ENCODE measurements at regions of chr10 and their contacts with region 1.

Region 1: DNA sequence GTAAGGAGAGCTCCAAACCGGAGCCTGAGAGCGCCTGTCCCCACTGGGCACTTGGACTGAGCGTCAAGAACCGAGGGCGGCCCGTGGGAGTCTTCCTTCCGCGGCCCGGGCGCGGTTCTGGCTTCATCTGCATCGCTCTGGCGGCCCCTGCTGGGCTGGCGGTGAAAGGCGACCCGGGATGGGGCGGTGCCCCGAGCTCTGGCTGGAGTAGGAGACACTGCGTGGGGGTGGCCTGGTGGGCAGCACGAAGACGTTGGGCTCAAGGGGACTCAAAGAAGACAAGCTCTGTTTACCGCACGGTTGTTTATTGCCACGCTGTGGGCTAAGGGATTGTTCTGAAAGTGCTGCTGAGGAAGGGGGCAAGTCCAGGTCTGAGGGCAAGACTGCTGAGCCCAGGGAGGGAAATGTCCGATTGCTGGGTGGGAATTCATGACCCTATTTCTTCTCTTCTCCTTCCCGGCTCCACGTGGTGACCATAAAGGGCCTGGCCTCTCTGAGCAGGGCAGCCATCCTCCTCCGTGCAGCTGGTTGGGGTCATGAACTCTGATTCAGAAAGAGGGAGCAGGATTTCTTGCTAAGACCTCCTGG is 29.8 kb downstream of the PLAU start:
- DNase-seq: peak; percentile 88
- ATAC-seq: peak; percentile 99
- H3K4me3 Mint-ChIP-seq: no peak overlapping the region
- H3K27ac Mint-ChIP-seq: no peak overlapping the region
- H3K4me1 Mint-ChIP-seq: peaks cover 5% of the 10 kb centered on the region
- H3K27me3 Mint-ChIP-seq: peaks cover 9% of the 10 kb centered on the region
- CTCF ChIP-seq: peak; percentile 99

Region 2: GRCh38 chr10:73803680-73804286 is 136.9 kb before region 1 on chr10:
- CTCF ChIA-PET with region 1: no interaction called
- POLR2A ChIA-PET with region 1: no interaction called
- intact Hi-C with region 1: no loop called
- DNase-seq: peak; percentile 23
- ATAC-seq: peak; percentile 73
- H3K4me3 Mint-ChIP-seq: no peak overlapping the region
- H3K27ac Mint-ChIP-seq: peak overlapping the region; percentile 89
- H3K4me1 Mint-ChIP-seq: peaks cover 43% of the 10 kb centered on the region
- H3K27me3 Mint-ChIP-seq: no peaks in the 10 kb centered on the region
- CTCF ChIP-seq: no peak

Region 3: GRCh38 chr10:73848821-73849489 is 91.8 kb before region 1 on chr10:
- CTCF ChIA-PET with region 1: interaction called, 53 read pairs
- POLR2A ChIA-PET with region 1: interaction called, 4 read pairs
- intact Hi-C with region 1: no loop called
- DNase-seq: peak; percentile 97
- ATAC-seq: peak; percentile 100
- H3K4me3 Mint-ChIP-seq: no peak overlapping the region
- H3K27ac Mint-ChIP-seq: peak overlapping the region; percentile 76
- H3K4me1 Mint-ChIP-seq: peaks cover 12% of the 10 kb centered on the region
- H3K27me3 Mint-ChIP-seq: no peaks in the 10 kb centered on the region
- CTCF ChIP-seq: peak; percentile 94

Region 4: GRCh38 chr10:73906524-73907447 is 33.9 kb before region 1 on chr10:
- CTCF ChIA-PET with region 1: interaction called, 466 read pairs
- POLR2A ChIA-PET with region 1: no interaction called
- intact Hi-C with region 1: no loop called
- DNase-seq: no peak
- ATAC-seq: no peak
- H3K4me3 Mint-ChIP-seq: no peak overlapping the region
- H3K27ac Mint-ChIP-seq: no peak overlapping the region
- H3K4me1 Mint-ChIP-seq: peaks cover 35% of the 10 kb centered on the region
- H3K27me3 Mint-ChIP-seq: peaks cover 52% of the 10 kb centered on the region
- CTCF ChIP-seq: no peak

Region 5: GRCh38 chr10:73956476-73957359 is 16.0 kb after region 1 on chr10:
- CTCF ChIA-PET with region 1: interaction called, 77 read pairs
- POLR2A ChIA-PET with region 1: interaction called, 3 read pairs
- intact Hi-C with region 1: no loop called
- DNase-seq: peak; percentile 53
- ATAC-seq: peak; percentile 82
- H3K4me3 Mint-ChIP-seq: peak overlapping the region; percentile 38
- H3K27ac Mint-ChIP-seq: peak overlapping the region; percentile 84
- H3K4me1 Mint-ChIP-seq: peaks cover 40% of the 10 kb centered on the region
- H3K27me3 Mint-ChIP-seq: no peaks in the 10 kb centered on the region
- CTCF ChIP-seq: no peak

Region 6: DNA sequence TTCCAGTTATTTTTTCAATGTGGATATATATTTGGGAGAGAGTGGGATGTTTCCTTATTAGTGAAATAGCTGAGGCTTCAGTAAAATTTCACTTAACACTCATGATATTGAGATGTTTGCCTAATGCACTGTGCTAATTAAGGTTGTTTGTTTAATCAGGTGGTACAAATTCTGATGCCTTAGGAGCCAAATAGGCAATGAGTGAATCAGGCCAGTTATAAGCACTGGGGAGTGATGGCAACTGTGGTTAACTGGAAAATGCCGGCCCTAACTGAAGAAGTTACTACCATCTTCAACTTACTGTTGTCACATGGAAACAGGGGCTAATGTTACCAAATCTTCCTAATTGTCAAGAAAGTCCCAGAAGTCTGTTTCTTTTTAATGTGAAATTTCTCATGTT is 89.2 kb after region 1 on chr10:
- CTCF ChIA-PET with region 1: interaction called, 10 read pairs
- POLR2A ChIA-PET with region 1: no interaction called
- intact Hi-C with region 1: no loop called
- DNase-seq: no peak
- ATAC-seq: no peak
- H3K4me3 Mint-ChIP-seq: no peak overlapping the region
- H3K27ac Mint-ChIP-seq: no peak overlapping the region
- H3K4me1 Mint-ChIP-seq: peaks cover 21% of the 10 kb centered on the region
- H3K27me3 Mint-ChIP-seq: no peaks in the 10 kb centered on the region
- CTCF ChIP-seq: no peak

Region 7: DNA sequence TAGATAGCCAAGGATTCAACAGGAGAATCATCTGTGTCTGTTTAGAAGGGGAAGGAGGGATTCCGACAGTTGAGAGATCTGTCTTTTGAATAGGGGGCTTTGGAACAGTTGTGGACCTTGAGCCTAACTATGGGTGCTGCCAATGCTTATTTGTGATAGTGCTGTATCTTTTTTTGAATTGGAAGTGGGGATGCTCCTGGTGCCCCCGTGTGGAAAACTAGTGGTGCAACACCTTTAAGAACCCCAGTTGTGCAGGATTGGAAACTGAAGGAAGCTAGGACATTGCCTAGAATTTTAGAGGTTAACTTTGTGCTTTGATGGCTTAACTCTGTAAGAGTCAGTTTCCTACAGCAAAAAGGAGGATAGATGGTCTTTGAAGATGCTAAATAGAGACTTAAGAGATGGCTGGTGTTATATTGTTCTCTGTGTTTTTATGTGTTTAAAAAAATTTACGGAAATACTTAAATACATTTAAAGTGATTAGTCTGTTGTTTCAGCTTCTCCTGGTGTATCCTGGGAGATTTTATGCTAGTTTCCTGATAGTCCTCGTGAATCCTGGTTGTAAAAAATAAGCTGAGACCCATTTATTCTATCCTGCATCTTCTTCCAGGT is 140.6 kb after region 1 on chr10:
- CTCF ChIA-PET with region 1: interaction called, 32 read pairs
- POLR2A ChIA-PET with region 1: no interaction called
- intact Hi-C with region 1: no loop called
- DNase-seq: peak; percentile 56
- ATAC-seq: peak; percentile 37
- H3K4me3 Mint-ChIP-seq: no peak overlapping the region
- H3K27ac Mint-ChIP-seq: no peak overlapping the region
- H3K4me1 Mint-ChIP-seq: peaks cover 40% of the 10 kb centered on the region
- H3K27me3 Mint-ChIP-seq: no peaks in the 10 kb centered on the region
- CTCF ChIP-seq: peak; percentile 71

Region 8: DNA sequence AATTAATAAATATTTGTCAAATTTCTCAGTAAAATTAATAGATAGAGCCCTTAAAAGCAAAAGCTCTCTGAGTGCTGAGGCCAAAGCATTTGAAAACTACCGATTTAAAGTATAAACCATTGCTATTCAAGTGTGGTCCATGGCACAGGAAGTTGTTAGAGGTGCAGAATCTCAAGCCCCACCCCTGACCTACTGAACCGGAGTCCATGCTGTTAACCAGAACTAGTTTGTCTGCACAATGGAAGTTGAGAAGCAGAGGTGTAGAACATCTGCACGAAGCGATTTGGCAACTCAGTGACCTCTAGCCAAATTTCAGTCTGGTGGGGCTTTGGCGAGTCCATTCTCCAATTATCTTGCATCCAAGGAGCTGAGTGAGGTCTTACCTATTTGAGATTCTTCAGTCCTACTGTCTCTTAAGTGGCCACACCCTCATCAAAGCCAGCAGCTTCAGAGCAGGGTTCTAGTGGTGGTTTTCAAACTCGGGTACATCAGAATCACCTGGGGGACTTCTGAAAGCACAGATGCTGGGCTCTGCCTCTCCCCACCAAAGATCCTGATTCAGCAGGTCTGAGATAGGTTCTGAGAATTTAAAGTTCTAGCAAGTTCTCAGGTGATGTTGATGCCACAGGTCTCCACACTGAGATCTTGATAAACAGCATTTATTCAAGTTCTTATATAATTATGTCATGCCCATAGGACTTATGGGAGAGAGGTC is 1073.9 kb after region 1 on chr10:
- CTCF ChIA-PET with region 1: no interaction called
- POLR2A ChIA-PET with region 1: no interaction called
- intact Hi-C with region 1: no loop called
- DNase-seq: peak; percentile 43
- ATAC-seq: peak; percentile 61
- H3K4me3 Mint-ChIP-seq: no peak overlapping the region
- H3K27ac Mint-ChIP-seq: peak overlapping the region; percentile 71
- H3K4me1 Mint-ChIP-seq: peaks cover 50% of the 10 kb centered on the region
- H3K27me3 Mint-ChIP-seq: no peaks in the 10 kb centered on the region
- CTCF ChIP-seq: no peak

Measured in activated CD8-positive, alpha-beta T cell treated with anti-CD3 and anti-CD28 coated beads for 36 hours (primary cell).